B cell (primary cell): ENCODE measurements at regions of chr3 and their contacts with region 1.

Region 1: DNA sequence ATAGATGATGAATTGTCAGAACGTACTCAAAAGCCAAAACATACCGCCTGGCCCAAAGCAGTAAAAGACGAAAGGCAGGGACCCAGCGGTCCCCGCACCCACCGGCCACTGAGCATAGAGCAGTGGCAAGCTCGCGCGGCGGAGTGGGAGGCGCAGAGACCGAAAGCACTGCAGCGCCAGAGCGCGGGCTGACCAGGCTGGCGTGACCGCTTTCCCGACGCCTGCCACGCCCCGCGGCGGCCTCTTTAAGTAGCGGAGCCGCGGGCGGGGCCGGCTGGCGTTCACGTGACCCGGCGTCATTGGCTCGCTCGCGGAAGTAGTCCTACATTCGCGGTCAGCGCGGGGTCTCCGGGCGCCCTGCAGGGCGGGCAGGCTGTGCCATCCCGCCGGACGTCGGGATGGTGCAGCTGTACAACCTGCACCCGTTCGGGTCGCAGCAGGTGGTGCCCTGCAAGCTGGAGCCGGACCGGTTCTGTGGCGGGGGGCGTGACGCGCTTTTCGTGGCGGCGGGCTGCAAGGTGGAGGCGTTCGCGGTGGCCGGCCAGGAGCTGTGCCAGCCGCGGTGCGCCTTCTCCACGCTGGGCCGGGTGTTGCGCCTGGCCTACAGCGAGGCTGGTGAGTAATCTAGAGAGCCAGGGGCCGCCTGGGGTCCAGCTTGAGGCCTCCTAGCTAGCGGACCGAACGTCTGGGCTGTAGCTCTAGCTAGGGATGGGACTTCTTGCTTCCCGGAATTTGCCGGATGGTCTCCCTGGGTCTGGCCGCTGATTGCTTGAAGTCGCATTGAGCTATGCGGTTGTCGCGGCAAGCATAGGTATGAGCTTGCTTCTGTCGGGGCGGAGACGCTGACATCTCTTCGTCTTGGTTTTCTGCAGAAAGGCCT is at the start of gene HPS3:
- DNase-seq: peak; percentile 93
- ATAC-seq: peak; percentile 94
- H3K4me3 ChIP-seq: peak within 1 kb of the TSS; percentile 91 to 98 (median 97)
- H3K4me3 Mint-ChIP-seq: peak within 1 kb of the TSS; percentile 90
- H3K27ac ChIP-seq: peak within 1 kb of the TSS; percentile 52 to 82
- H3K27ac Mint-ChIP-seq: peak within 1 kb of the TSS; percentile 87
- H3K4me1 ChIP-seq: peaks cover 32 to 39% of the 10 kb centered on the region in 2 donors
- H3K4me1 Mint-ChIP-seq: peaks cover 47% of the 10 kb centered on the region
- H3K27me3 ChIP-seq: no peaks in the 10 kb centered on the region
- H3K27me3 Mint-ChIP-seq: no peaks in the 10 kb centered on the region
- CTCF ChIP-seq: no peak
- total RNA-seq, gene HPS3: 48.1 and 53.0 TPM in 2 replicates

Region 2: DNA sequence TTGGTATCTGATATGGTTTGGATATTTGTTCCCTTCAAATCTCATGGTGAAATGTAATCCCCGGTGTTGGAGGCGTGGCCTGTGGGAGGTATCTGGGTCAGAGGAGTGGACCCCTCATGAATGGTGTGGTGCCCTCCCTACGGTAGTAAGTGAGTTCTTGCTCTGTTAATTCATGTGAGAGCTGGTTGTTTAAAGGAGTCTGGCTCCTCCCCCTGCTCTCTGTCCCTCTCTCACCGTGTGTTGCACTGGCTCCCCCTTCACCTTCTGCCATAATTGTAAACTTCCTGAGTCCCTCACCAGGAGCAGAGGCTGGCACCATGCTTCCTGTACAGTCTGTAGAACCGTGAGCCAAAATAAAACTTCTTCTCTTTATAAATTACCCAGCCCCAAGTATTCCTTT is 678.7 kb before region 1 on chr3:
- CTCF ChIA-PET with region 1: no interaction called
- POLR2A ChIA-PET with region 1: no interaction called
- intact Hi-C with region 1: no loop called
- DNase-seq: no peak
- ATAC-seq: no peak
- H3K4me3 ChIP-seq: no peak overlapping the region
- H3K4me3 Mint-ChIP-seq: no peak overlapping the region
- H3K27ac ChIP-seq: no peak overlapping the region
- H3K27ac Mint-ChIP-seq: no peak overlapping the region
- H3K4me1 ChIP-seq: no peaks in the 10 kb centered on the region
- H3K4me1 Mint-ChIP-seq: no peaks in the 10 kb centered on the region
- H3K27me3 ChIP-seq: no peaks in the 10 kb centered on the region
- H3K27me3 Mint-ChIP-seq: no peaks in the 10 kb centered on the region
- CTCF ChIP-seq: no peak

Region 3: DNA sequence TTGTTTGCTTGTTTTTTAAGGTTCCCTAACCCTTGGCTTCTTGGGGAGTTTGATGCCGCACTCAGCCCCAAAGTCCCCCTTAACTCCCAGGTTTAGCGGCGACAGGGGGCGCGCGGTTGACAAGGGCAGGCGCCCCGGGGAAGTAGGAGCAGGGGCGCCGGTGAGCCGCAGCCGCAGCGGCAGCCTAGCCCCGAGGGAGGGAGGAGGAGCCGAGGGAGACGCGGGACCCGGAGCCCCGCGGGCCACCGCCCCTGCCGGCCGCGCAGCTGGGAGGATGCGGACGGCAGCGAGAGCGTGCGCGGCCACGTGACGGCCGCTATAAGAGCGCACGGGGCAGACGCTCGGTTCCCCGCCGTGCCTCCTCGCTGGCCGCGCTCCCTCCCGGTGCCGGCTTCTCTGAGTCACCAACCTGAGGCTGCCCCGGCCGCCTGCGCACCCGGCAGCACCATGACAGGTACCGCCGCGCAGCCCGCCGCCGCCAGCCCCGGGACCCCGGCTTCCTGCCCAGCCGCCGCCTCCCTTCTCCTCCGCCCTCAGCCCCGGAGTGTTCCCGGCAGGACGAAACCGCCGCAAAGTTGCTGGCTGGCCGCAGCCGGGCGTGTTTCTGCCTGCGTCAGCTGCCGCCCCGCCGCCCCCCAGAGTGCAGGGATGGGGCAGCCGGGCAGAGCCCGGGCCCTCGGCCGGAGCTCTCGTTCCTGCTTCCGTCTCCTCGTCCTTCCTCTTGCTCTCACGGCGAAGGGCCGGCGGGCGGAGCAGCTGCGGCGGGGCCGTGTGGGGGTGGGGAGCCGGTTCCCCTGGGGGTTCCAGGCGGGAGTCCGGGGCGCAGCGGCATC is 138.2 kb before region 1 on chr3 and contains the start of gene GYG1:
- CTCF ChIA-PET with region 1: interaction called, 4 read pairs
- POLR2A ChIA-PET with region 1: no interaction called
- intact Hi-C with region 1: loop called (anchors 5 kb)
- DNase-seq: peak; percentile 89
- ATAC-seq: peak; percentile 89
- H3K4me3 ChIP-seq: peak within 1 kb of the TSS; percentile 60 to 93 (median 86)
- H3K4me3 Mint-ChIP-seq: peak within 1 kb of the TSS; percentile 85
- H3K27ac ChIP-seq: peak within 1 kb of the TSS; percentile 41 to 73
- H3K27ac Mint-ChIP-seq: peak within 1 kb of the TSS; percentile 82
- H3K4me1 ChIP-seq: peaks cover 14 to 19% of the 10 kb centered on the region in 2 donors
- H3K4me1 Mint-ChIP-seq: peaks cover 15% of the 10 kb centered on the region
- H3K27me3 ChIP-seq: no peaks in the 10 kb centered on the region
- H3K27me3 Mint-ChIP-seq: no peaks in the 10 kb centered on the region
- CTCF ChIP-seq: peak; percentile 18
- total RNA-seq, gene GYG1: 16.3 and 20.4 TPM in 2 replicates

Region 4: DNA sequence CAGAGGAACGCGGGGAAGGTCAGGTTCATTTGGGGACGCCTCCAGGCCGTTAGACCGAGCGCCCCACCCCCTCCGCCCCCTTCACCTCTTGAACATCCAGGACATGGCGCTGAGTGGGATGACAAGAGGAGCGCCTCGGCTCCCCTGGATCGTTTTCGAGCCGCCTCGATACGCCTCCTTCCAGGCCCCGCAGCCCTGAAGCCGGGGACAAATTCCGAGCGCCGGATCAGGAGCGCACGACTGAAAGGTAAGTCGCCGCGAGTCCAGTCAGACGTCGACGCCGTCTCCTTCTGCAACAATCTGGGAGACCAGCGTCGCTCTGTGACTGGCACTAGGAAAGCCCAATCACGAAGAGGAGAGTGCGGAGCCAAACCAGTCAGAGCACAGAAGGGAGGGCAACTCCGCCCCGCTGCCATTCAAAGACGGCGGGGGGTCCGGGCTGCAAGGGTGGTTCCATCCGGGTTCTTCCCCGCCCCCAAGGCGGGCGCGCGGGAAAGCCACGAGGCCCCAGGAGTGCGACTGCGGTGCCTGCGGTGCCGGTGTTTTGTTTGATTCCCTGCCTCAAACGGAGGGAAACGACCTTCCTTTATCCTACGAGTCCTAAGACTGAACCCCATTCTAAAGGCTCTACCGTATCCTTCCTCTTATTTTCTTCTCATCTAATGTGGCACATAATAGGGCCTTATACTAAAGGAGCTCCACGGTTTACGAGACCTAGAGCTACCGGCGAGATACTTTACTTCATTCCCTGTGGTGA is 43.2 kb before region 1 on chr3 and contains the start of gene HLTF:
- CTCF ChIA-PET with region 1: no interaction called
- POLR2A ChIA-PET with region 1: interaction called, 4 read pairs
- intact Hi-C with region 1: loop called (anchors 1 kb)
- DNase-seq: peak; percentile 93
- ATAC-seq: peak; percentile 99
- H3K4me3 ChIP-seq: peak within 1 kb of the TSS; percentile 65 to 95 (median 86)
- H3K4me3 Mint-ChIP-seq: peak within 1 kb of the TSS; percentile 91
- H3K27ac ChIP-seq: peak within 1 kb of the TSS in 1 of 2 donors; percentile 38
- H3K27ac Mint-ChIP-seq: peak within 1 kb of the TSS; percentile 87
- H3K4me1 ChIP-seq: peaks cover 10 to 14% of the 10 kb centered on the region in 2 donors
- H3K4me1 Mint-ChIP-seq: peaks cover 25% of the 10 kb centered on the region
- H3K27me3 ChIP-seq: no peaks in the 10 kb centered on the region
- H3K27me3 Mint-ChIP-seq: no peaks in the 10 kb centered on the region
- CTCF ChIP-seq: no peak
- total RNA-seq, gene HLTF: 19.1 and 22.9 TPM in 2 replicates

Region 5: GRCh38 chr3:149145974-149146373 is 16.4 kb after region 1 on chr3:
- CTCF ChIA-PET with region 1: interaction called, 13 read pairs
- POLR2A ChIA-PET with region 1: interaction called, 16 read pairs
- intact Hi-C with region 1: loop called (anchors 1 kb)
- DNase-seq: peak; percentile 88
- ATAC-seq: peak; percentile 93
- H3K4me3 ChIP-seq: peak overlapping the region in 4 of 5 experiments; percentile 6 to 42 (median 34)
- H3K4me3 Mint-ChIP-seq: no peak overlapping the region
- H3K27ac ChIP-seq: peak overlapping the region; percentile 84
- H3K27ac Mint-ChIP-seq: no peak overlapping the region
- H3K4me1 ChIP-seq: peaks cover 54 to 65% of the 10 kb centered on the region in 2 donors
- H3K4me1 Mint-ChIP-seq: peaks cover 45% of the 10 kb centered on the region
- H3K27me3 ChIP-seq: no peaks in the 10 kb centered on the region
- H3K27me3 Mint-ChIP-seq: no peaks in the 10 kb centered on the region
- CTCF ChIP-seq: no peak

Region 6: DNA sequence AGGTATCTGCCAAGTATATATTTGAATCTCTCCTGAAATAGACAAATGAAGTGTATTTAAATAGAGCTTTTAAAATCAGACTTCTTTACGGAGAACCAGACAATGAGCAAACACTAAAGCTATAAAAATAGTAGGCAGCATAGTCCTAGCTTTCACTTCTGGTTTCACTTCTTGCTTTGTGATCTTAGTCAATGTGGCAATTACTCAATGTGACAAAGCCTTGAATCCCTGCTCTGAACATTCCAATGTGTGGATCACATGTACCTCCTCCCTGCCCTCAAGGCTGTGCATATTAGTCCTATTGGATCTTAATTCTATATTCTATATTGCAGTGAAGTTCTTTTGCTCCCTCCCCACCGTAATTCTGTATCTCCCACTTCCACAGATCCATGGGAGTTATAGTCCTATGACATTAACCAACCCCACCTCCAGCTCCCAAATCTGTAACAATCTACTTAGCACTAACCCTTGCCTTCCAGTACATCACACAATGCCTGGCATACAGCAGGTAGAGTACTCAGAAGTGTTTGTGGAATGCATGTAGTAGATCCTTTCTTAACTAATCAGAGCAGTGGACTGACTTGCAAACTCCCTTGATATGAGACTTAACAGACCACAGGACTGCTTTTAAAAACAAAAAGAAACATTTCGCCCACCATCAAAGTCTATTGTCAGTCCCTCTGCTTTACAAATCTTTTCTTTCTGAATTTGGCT is 116.3 kb after region 1 on chr3:
- CTCF ChIA-PET with region 1: interaction called, 3 read pairs
- POLR2A ChIA-PET with region 1: interaction called, 7 read pairs
- intact Hi-C with region 1: loop called (anchors 1 kb)
- DNase-seq: peak; percentile 69
- ATAC-seq: peak; percentile 67
- H3K4me3 ChIP-seq: peak overlapping the region in 3 of 5 experiments; percentile 26
- H3K4me3 Mint-ChIP-seq: peak overlapping the region; percentile 57
- H3K27ac ChIP-seq: peak overlapping the region; percentile 46 to 87
- H3K27ac Mint-ChIP-seq: peak overlapping the region; percentile 57
- H3K4me1 ChIP-seq: peaks cover 55 to 56% of the 10 kb centered on the region in 2 donors
- H3K4me1 Mint-ChIP-seq: peaks cover 61% of the 10 kb centered on the region
- H3K27me3 ChIP-seq: no peaks in the 10 kb centered on the region
- H3K27me3 Mint-ChIP-seq: no peaks in the 10 kb centered on the region
- CTCF ChIP-seq: no peak

Region 7: GRCh38 chr3:149480325-149481017 is 350.9 kb after region 1 on chr3:
- CTCF ChIA-PET with region 1: no interaction called
- POLR2A ChIA-PET with region 1: no interaction called
- intact Hi-C with region 1: loop called (anchors 10 kb)
- DNase-seq: peak; percentile 15
- ATAC-seq: no peak
- H3K4me3 ChIP-seq: no peak overlapping the region
- H3K4me3 Mint-ChIP-seq: no peak overlapping the region
- H3K27ac ChIP-seq: no peak overlapping the region
- H3K27ac Mint-ChIP-seq: no peak overlapping the region
- H3K4me1 ChIP-seq: no peaks in the 10 kb centered on the region
- H3K4me1 Mint-ChIP-seq: no peaks in the 10 kb centered on the region
- H3K27me3 ChIP-seq: no peaks in the 10 kb centered on the region
- H3K27me3 Mint-ChIP-seq: peaks cover 4% of the 10 kb centered on the region
- CTCF ChIP-seq: no peak